ENCODE measurements at regions of chr15 and their contacts with region 1.

Region 1: DNA sequence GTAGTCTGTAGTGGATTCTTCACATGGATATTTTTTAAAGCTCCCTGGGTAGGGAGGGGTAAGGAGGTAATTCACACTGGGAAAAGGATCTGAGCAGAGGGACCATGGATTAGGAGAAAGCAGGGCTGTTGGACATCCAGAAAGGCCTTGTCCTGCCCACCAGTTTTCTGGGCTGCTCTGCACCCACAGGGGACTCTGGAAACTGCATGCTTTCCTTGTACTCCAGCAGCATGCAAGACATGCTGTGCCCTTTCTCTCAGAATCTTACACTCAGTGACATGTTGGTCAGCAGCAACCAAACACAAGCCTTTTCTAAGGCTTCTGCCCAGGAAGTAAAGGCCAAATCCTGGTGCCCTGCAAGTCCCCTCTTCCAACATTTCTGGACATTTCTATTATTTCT is 2.5 kb upstream of the FBN1 start:
- DNase-seq: peak; percentile 16 to 50 (median 45)
- H3K4me3 ChIP-seq: no peak overlapping the region
- H3K27ac ChIP-seq: no peak overlapping the region
- H3K4me1 ChIP-seq: peaks cover 5 to 23% (median 18%) of the 10 kb centered on the region in 4 experiments
- H3K27me3 ChIP-seq: peaks cover 0 to 3% (median 0%) of the 10 kb centered on the region in 5 experiments

Region 2: DNA sequence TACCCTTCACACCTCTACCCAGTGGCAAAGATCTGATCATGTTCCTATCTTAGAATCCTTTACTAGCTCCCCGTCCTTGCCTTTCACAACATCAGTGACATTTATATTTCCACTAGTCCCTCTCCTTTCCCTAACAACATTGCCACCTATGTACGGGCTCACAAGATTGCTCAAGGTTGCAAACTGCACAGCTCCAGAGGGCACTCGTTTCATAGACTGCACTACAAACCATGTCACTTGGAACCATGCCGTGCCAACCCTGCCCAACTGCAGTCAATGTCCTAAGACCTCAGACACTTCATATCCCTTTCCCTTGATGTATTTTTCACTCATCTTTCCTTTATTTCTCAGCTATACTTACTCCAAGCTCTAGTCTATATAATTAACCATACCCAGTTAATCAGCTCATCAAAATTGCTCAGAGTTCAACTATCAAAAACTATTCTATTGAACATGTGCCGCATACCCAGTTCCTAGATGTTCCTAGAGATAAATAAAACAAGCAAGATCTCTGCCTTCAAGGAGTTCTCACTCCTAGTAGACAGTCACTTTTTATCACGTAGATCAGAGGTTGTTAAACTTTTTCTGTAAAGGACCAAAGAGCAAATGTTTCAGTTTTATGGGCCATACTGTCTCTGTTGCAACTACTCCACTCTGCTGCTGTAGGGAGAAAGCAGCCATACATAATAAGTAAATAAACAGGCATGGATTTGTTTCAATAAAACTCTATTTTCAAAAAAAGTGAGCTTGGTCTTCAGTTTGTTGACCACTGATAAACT is 10.5 kb before region 1 on chr15:
- CTCF ChIA-PET with region 1: no interaction called
- POLR2A ChIA-PET with region 1: interaction called, 12 read pairs
- DNase-seq: no peak
- H3K4me3 ChIP-seq: no peak overlapping the region
- H3K27ac ChIP-seq: no peak overlapping the region
- H3K4me1 ChIP-seq: peaks cover 0 to 2% (median 0%) of the 10 kb centered on the region in 4 experiments
- H3K27me3 ChIP-seq: no peaks in the 10 kb centered on the region

Region 3: GRCh38 chr15:48682949-48683651 is 35.1 kb after region 1 on chr15:
- CTCF ChIA-PET with region 1: no interaction called
- POLR2A ChIA-PET with region 1: no interaction called
- DNase-seq: no peak
- H3K4me3 ChIP-seq: no peak overlapping the region
- H3K27ac ChIP-seq: no peak overlapping the region
- H3K4me1 ChIP-seq: no peaks in the 10 kb centered on the region
- H3K27me3 ChIP-seq: no peaks in the 10 kb centered on the region

Measured in common myeloid progenitor, CD34-positive (primary cell).